ENCODE measurements at regions of chr2 and their contacts with region 1.

Region 1: DNA sequence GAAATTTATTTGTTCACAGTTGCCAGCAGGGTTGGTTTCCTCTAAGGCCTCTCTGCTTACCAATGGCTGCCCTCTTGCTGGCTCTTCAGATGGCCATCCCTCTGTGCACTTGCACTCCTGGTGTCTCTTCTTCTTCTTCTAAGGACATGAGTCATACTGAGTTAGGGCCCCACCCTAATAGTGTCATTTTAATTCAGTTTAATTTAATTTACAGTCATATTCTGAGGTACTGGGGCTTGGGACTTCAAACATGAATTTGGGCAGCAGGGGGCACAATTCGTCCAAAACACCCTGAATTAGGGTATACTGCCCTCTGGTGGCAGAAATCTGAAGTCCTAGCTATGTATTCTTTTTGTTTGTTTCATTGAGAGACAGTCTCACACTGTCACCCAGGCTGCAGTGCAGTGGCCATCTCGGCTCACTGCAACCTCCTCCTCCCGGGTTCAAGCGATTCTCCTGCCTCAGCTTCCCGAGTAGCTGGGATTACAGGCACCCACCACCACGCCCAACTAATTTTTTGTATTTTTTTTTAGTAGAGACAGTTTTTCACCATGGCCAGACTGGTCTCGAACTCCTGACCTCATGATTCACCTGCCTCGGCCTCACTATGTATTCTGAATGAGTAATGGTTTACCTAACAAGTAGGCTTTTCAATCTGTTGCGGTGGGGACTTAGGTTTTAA is 19.8 kb downstream of the SLC4A1AP start:
- DNase-seq: peak; percentile 98
- ATAC-seq: peak; percentile 84
- H3K4me3 Mint-ChIP-seq: no peak overlapping the region
- H3K27ac Mint-ChIP-seq: peak overlapping the region; percentile 79
- H3K4me1 Mint-ChIP-seq: peaks cover 34% of the 10 kb centered on the region
- H3K27me3 Mint-ChIP-seq: no peaks in the 10 kb centered on the region
- CTCF ChIP-seq: peak; percentile 100

Region 2: GRCh38 chr2:27566628-27567027 is 116.9 kb before region 1 on chr2:
- CTCF ChIA-PET with region 1: no interaction called
- POLR2A ChIA-PET with region 1: no interaction called
- intact Hi-C with region 1: no loop called
- DNase-seq: no peak
- ATAC-seq: no peak
- H3K4me3 Mint-ChIP-seq: no peak overlapping the region
- H3K27ac Mint-ChIP-seq: no peak overlapping the region
- H3K4me1 Mint-ChIP-seq: no peaks in the 10 kb centered on the region
- H3K27me3 Mint-ChIP-seq: peaks cover 28% of the 10 kb centered on the region
- CTCF ChIP-seq: no peak

Region 3: DNA sequence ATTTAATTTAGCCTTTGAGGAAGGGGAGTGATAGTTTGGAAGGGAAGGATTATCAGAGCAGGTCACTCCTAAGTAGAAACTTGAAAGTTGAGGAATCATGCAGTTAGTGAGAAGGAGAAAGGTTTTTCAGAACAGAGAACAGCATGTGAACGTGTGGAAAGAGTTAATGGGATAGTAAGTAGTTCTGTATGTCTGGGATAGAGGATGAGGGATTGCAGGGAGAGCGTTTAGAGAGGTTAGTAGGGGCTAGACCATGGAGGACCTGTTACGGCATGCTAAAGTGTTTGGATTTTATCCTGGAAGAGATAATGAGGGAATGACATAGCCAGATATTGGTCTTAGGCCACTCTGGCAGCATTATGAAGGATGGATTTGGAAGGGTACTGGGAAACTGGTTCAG is 98.9 kb before region 1 on chr2:
- CTCF ChIA-PET with region 1: interaction called, 10 read pairs
- POLR2A ChIA-PET with region 1: interaction called, 5 read pairs
- intact Hi-C with region 1: no loop called
- DNase-seq: no peak
- ATAC-seq: no peak
- H3K4me3 Mint-ChIP-seq: peak overlapping the region; percentile 97
- H3K27ac Mint-ChIP-seq: peak overlapping the region; percentile 23
- H3K4me1 Mint-ChIP-seq: peaks cover 50% of the 10 kb centered on the region
- H3K27me3 Mint-ChIP-seq: no peaks in the 10 kb centered on the region
- CTCF ChIP-seq: no peak

Region 4: DNA sequence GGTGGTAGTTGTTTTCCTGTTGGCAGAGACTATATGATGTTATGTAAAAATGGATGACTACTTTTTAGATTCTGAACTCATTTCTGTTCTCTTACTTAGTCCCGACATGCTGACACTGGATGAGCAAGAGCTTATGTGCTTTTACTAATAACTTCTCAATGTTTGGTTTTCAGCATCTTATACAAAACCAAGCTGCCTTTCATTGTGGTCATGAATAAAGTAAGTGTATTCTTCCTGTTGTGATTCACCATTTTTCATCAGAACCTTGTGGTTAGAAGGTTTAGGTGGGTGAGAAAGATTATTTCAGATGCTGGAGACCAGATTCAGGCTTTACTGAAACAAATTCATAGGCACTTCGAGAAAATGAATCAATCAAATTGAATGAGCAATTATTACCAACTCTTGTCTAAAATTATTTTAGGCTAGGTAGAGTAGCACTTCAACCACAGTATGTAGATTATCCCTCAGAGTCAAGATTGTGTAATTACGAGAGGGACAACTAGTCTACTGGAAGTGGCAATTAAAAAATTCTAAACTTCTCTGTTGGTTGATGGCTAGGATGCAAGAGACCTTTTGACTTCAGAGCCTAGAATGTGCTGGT is 45.4 kb before region 1 on chr2:
- CTCF ChIA-PET with region 1: interaction called, 11 read pairs
- POLR2A ChIA-PET with region 1: no interaction called
- intact Hi-C with region 1: no loop called
- DNase-seq: peak; percentile 33
- ATAC-seq: peak; percentile 89
- H3K4me3 Mint-ChIP-seq: peak overlapping the region; percentile 9
- H3K27ac Mint-ChIP-seq: peak overlapping the region; percentile 94
- H3K4me1 Mint-ChIP-seq: peaks cover 34% of the 10 kb centered on the region
- H3K27me3 Mint-ChIP-seq: no peaks in the 10 kb centered on the region
- CTCF ChIP-seq: no peak

Region 5: DNA sequence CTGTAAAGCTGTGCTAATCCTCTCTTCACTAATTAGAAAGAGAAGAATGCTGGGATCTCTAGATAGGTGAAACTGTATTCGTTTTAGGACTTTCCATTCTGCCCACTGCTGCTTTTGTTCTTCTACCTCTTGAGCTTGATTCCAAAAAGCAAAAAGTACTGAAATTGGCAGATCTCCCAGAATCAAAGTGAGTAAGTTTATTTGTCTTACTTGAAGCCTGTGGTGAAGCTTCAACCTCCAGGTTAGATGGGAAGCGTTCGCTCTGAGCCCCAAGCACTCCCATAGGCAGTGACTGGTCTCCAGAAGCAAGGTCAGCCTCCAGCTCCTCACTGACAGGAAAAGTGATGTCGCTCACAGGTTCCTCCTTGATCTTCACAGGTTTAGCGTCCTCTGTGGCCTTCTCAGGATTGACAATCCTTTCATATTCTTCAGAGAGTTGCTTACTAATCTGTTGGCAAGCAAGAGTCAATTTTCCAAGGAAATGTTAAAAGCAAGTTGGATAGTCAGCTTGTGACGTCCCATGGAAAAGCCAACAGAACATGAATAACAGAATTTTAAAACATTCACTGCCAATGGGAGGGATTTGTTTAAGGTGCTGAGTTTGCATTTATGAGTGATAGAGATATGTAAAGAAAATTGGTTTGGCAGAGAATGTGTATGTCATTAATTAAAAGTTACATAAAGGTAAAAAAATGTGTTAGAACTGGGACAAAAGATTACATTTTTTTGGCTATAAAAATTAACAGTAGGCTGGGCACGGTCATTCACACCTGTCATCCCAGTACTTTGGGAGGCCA is 28.2 kb before region 1 on chr2:
- CTCF ChIA-PET with region 1: interaction called, 14 read pairs
- POLR2A ChIA-PET with region 1: interaction called, 4 read pairs
- intact Hi-C with region 1: no loop called
- DNase-seq: no peak
- ATAC-seq: no peak
- H3K4me3 Mint-ChIP-seq: no peak overlapping the region
- H3K27ac Mint-ChIP-seq: no peak overlapping the region
- H3K4me1 Mint-ChIP-seq: peaks cover 26% of the 10 kb centered on the region
- H3K27me3 Mint-ChIP-seq: no peaks in the 10 kb centered on the region
- CTCF ChIP-seq: no peak

Region 6: GRCh38 chr2:27672723-27673486 is 10.6 kb before region 1 on chr2:
- CTCF ChIA-PET with region 1: interaction called, 58 read pairs
- POLR2A ChIA-PET with region 1: no interaction called
- intact Hi-C with region 1: no loop called
- DNase-seq: no peak
- ATAC-seq: no peak
- H3K4me3 Mint-ChIP-seq: no peak overlapping the region
- H3K27ac Mint-ChIP-seq: peak overlapping the region; percentile 49
- H3K4me1 Mint-ChIP-seq: peaks cover 8% of the 10 kb centered on the region
- H3K27me3 Mint-ChIP-seq: no peaks in the 10 kb centered on the region
- CTCF ChIP-seq: no peak

Region 7: GRCh38 chr2:27703638-27704341 is 20.3 kb after region 1 on chr2:
- CTCF ChIA-PET with region 1: interaction called, 64 read pairs
- POLR2A ChIA-PET with region 1: no interaction called
- intact Hi-C with region 1: no loop called
- DNase-seq: peak; percentile 93
- ATAC-seq: peak; percentile 86
- H3K4me3 Mint-ChIP-seq: no peak overlapping the region
- H3K27ac Mint-ChIP-seq: no peak overlapping the region
- H3K4me1 Mint-ChIP-seq: peaks cover 9% of the 10 kb centered on the region
- H3K27me3 Mint-ChIP-seq: no peaks in the 10 kb centered on the region
- CTCF ChIP-seq: peak; percentile 83

Region 8: DNA sequence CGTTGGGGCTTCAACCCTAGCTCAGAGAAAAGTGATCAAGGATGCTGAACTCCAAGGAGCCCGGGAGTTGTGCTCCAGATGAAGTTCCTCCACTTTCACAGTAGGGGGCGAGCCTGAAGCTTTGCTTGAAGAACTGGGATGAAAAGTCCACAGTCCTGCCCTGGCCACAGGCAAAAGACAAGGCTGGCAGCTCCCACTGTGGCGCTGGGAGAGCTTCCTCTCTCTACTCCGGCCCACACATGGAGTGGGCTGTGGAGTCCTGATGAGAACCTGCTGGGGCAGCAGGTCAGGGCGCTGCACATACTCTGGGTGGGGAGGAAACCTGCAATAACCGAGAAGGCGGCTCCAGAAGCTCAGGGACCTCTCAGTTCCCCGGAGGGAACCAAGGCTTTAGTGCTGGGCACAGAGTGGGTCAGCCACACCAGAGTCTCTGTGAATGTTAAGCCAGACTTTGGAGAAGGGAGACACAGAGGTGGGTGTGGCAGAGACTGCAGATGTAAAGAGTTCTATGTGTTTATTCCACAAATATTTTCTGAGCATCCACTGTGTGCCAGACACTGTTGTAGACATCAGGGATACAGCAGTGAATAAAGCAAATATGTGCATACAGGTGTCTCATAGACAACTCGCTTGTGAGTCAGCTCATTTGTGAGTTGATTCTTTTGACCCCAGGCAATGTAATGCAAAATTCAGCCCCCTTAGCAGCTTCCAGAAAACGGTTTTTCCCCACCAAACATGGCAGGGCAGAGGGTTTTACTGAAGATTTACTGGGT is 40.0 kb after region 1 on chr2:
- CTCF ChIA-PET with region 1: interaction called, 13 read pairs
- POLR2A ChIA-PET with region 1: no interaction called
- intact Hi-C with region 1: no loop called
- DNase-seq: peak; percentile 30
- ATAC-seq: no peak
- H3K4me3 Mint-ChIP-seq: no peak overlapping the region
- H3K27ac Mint-ChIP-seq: no peak overlapping the region
- H3K4me1 Mint-ChIP-seq: peaks cover 28% of the 10 kb centered on the region
- H3K27me3 Mint-ChIP-seq: peaks cover 6% of the 10 kb centered on the region
- CTCF ChIP-seq: peak; percentile 77

Measured in activated CD8-positive, alpha-beta T cell treated with anti-CD3 and anti-CD28 coated beads for 36 hours (primary cell).